ENCODE measurements at regions of chr9 and their contacts with region 1.

Region 1: GRCh38 chr9:98034593-98035546 is 21.7 kb upstream of the NANS start:
- DNase-seq: peak; percentile 69
- H3K4me3 Mint-ChIP-seq: no peak overlapping the region
- H3K27ac Mint-ChIP-seq: no peak overlapping the region
- H3K4me1 Mint-ChIP-seq: peaks cover 9% of the 10 kb centered on the region
- H3K27me3 Mint-ChIP-seq: peaks cover 5% of the 10 kb centered on the region
- CTCF ChIP-seq: peak; percentile 65

Region 2: DNA sequence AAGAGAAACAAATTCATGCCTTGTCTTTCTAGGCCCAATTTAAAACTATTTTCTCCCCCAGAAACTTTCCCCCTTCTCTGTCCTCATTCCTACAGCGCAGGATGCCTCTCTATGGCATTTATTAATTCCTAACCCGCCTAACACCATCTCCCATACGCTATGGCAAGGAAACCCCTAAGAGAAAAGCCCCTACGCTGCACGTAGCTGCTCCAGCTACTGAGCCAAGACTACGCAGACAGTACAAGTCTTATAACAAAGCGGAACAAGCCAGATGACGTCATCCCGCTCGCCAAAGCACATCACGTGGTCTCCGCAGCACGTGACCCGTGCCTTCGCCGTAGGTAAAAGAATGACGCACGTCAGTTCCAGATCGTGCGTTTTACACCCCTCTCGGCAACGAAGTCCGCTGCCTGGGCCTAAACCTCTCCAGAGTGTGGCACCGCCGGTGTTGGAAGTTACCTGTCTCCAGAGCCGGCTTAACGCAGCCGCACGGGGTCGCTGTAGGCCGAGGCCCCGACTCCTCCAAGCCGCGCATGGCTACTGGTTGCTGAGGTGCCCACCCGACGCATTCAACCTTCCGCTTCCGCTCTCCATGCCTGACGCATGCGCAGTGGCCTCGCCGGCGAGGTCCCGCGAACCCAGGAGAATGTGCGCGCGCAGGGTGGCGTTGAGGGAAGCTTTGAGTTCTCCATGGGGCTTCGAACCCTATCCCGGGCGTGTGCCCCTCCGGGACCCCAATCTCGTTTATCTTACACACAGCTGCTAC is 112.7 kb before region 1 on chr9 and contains the start of gene TRMO:
- CTCF ChIA-PET with region 1: interaction called, 6 read pairs
- intact Hi-C with region 1: loop called (anchors 1 kb)
- DNase-seq: peak; percentile 91
- H3K4me3 Mint-ChIP-seq: peak within 1 kb of the TSS; percentile 88
- H3K27ac Mint-ChIP-seq: peak within 1 kb of the TSS; percentile 99
- H3K4me1 Mint-ChIP-seq: peaks cover 19% of the 10 kb centered on the region
- H3K27me3 Mint-ChIP-seq: no peaks in the 10 kb centered on the region
- CTCF ChIP-seq: peak; percentile 33
- total RNA-seq, gene TRMO: 4.8 and 5.0 TPM in 2 replicates

Region 3: DNA sequence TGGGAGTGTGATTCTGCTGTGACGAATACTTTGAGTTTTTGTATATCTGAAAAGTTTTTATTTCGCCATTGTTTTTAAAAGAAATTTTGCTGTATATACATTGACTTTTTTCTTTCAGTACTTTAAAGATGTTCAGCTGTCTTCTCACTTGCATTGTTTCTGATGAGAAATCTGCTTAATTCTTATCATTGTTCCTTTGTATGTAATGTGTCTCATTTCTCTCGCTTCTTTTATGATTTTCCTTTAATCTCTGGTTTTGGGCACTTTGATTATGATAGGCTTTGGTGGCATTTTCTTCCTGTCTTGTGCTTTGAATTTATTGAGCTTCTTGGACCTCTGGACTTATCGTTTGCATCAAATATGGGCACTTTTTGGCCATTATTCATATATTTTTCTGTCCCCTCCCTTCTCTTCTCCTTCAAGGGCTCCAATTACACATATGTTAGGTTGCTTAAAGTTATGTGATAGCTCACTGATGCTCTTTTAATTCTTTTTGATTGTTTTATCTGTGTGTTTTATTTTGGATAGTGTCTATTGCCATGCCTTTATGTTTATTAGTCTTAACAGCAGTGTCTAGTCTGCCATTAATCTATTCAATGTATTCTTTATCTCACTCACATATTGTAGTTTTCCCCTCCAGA is 1902.2 kb after region 1 on chr9:
- CTCF ChIA-PET with region 1: interaction called, 10 read pairs
- intact Hi-C with region 1: no loop called
- DNase-seq: no peak
- H3K4me3 Mint-ChIP-seq: no peak overlapping the region
- H3K27ac Mint-ChIP-seq: no peak overlapping the region
- H3K4me1 Mint-ChIP-seq: peaks cover 8% of the 10 kb centered on the region
- H3K27me3 Mint-ChIP-seq: no peaks in the 10 kb centered on the region
- CTCF ChIP-seq: no peak

Measured in Calu3 (cell line).